Pancreas (tissue), 10 donors: ENCODE measurements at regions of chr3 and their contacts with region 1.

Region 1: GRCh38 chr3:13666781-13667709 is 118.1 kb downstream of the FBLN2 start:
- DNase-seq: peak in 1 of 6 donors; percentile 8
- ATAC-seq: no peak
- H3K4me3 ChIP-seq: no peak overlapping the region
- H3K27ac ChIP-seq: no peak overlapping the region
- H3K4me1 ChIP-seq: no peaks in the 10 kb centered on the region
- H3K27me3 ChIP-seq: no peaks in the 10 kb centered on the region
- CTCF ChIP-seq: no peak

Region 2: GRCh38 chr3:13544293-13544831 is 122.7 kb before region 1 on chr3:
- intact Hi-C with region 1: no loop called
- DNase-seq: no peak
- ATAC-seq: peak in 1 of 4 donors; percentile 17
- H3K4me3 ChIP-seq: no peak overlapping the region
- H3K27ac ChIP-seq: no peak overlapping the region
- H3K4me1 ChIP-seq: no peaks in the 10 kb centered on the region
- H3K27me3 ChIP-seq: no peaks in the 10 kb centered on the region
- CTCF ChIP-seq: no peak

Region 3: DNA sequence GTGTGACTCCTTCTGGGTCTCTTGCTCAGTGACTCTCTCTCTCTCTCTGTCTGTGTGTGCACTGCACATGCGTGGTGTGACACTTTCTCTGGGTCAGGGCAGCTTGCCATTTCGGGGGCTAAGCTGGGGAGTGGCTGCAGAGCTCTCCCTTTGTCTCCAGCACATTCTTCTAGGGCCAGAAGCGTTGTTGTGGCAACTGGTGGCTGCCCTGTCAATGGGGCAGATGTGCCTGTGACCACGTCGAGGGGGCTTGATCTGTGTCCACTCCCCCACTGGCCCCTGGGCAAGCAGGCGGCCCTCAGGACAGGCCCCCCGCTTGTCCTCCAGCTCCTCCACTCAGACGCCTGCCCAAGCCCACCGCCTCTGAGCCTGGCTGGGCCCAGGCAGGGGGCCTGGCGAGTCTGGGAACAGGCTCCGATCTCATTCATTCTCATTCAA is 145.0 kb after region 1 on chr3:
- intact Hi-C with region 1: no loop called
- DNase-seq: no peak
- ATAC-seq: no peak
- H3K4me3 ChIP-seq: no peak overlapping the region
- H3K27ac ChIP-seq: no peak overlapping the region
- H3K4me1 ChIP-seq: no peaks in the 10 kb centered on the region
- H3K27me3 ChIP-seq: no peaks in the 10 kb centered on the region
- CTCF ChIP-seq: no peak

Region 4: GRCh38 chr3:13879655-13880204 is 212.7 kb after region 1 on chr3 and contains the start of gene WNT7A:
- intact Hi-C with region 1: loop called in 1 of 3 experiments (anchors 10 kb)
- DNase-seq: peak in 2 of 6 donors; percentile 67 to 74
- ATAC-seq: peak; percentile 13 to 54 (median 29)
- H3K4me3 ChIP-seq: peak within 1 kb of the TSS in 3 of 4 donors; percentile 10 to 43 (median 20)
- H3K27ac ChIP-seq: no peak within 1 kb of the TSS
- H3K4me1 ChIP-seq: peaks cover 0 to 3% (median 0%) of the 10 kb centered on the region in 3 donors
- H3K27me3 ChIP-seq: peaks cover 0 to 5% (median 0%) of the 10 kb centered on the region in 4 donors
- CTCF ChIP-seq: no peak
- total RNA-seq, gene WNT7A: 0.09 to 0.31 (median 0.09) TPM in 5 of 6 donors, not detected in the other